Naive thymus-derived CD4-positive, alpha-beta T cell (primary cell): ENCODE measurements at regions of chr14 and their contacts with region 1.

Region 1: GRCh38 chr14:68775143-68776126 is 17.4 kb downstream of the ZFP36L1 start:
- DNase-seq: no peak
- ATAC-seq: no peak
- H3K4me3 ChIP-seq: no peak overlapping the region
- H3K4me3 Mint-ChIP-seq: peak overlapping the region in 2 of 10 donors; percentile 25 to 33
- H3K27ac ChIP-seq: no peak overlapping the region
- H3K27ac Mint-ChIP-seq: peak overlapping the region in 4 of 9 donors; percentile 39 to 68 (median 47)
- H3K4me1 ChIP-seq: peaks cover 26 to 49% of the 10 kb centered on the region in 2 donors
- H3K4me1 Mint-ChIP-seq: peaks cover 47 to 91% (median 80%) of the 10 kb centered on the region in 7 donors
- H3K27me3 ChIP-seq: no peaks in the 10 kb centered on the region
- H3K27me3 Mint-ChIP-seq: no peaks in the 10 kb centered on the region

Region 2: GRCh38 chr14:68649476-68650189 is 125.8 kb before region 1 on chr14:
- CTCF ChIA-PET with region 1: no interaction called
- POLR2A ChIA-PET with region 1: no interaction called
- intact Hi-C with region 1: no loop called
- DNase-seq: peak in 1 of 9 donors; percentile 10
- ATAC-seq: no peak
- H3K4me3 ChIP-seq: no peak overlapping the region
- H3K4me3 Mint-ChIP-seq: no peak overlapping the region
- H3K27ac ChIP-seq: no peak overlapping the region
- H3K27ac Mint-ChIP-seq: peak overlapping the region in 1 of 9 donors; percentile 47
- H3K4me1 ChIP-seq: peaks cover 0 to 3% of the 10 kb centered on the region in 2 donors
- H3K4me1 Mint-ChIP-seq: peaks cover 4 to 24% (median 22%) of the 10 kb centered on the region in 7 donors
- H3K27me3 ChIP-seq: no peaks in the 10 kb centered on the region
- H3K27me3 Mint-ChIP-seq: peaks cover 0 to 6% (median 0%) of the 10 kb centered on the region in 5 donors

Region 3: GRCh38 chr14:68734231-68734775 is 41.1 kb before region 1 on chr14:
- CTCF ChIA-PET with region 1: interaction called, 3 read pairs
- POLR2A ChIA-PET with region 1: interaction called, 4 read pairs
- intact Hi-C with region 1: loop called in 1 of 2 experiments (anchors 5 kb)
- DNase-seq: no peak
- ATAC-seq: peak; percentile 60
- H3K4me3 ChIP-seq: no peak overlapping the region
- H3K4me3 Mint-ChIP-seq: peak overlapping the region in 8 of 10 donors; percentile 2 to 50 (median 14)
- H3K27ac ChIP-seq: no peak overlapping the region
- H3K27ac Mint-ChIP-seq: peak overlapping the region in 7 of 9 donors; percentile 3 to 82 (median 66)
- H3K4me1 ChIP-seq: peaks cover 12 to 31% of the 10 kb centered on the region in 2 donors
- H3K4me1 Mint-ChIP-seq: peaks cover 17 to 53% (median 42%) of the 10 kb centered on the region in 7 donors
- H3K27me3 ChIP-seq: no peaks in the 10 kb centered on the region
- H3K27me3 Mint-ChIP-seq: no peaks in the 10 kb centered on the region

Region 4: GRCh38 chr14:68757618-68758081 is 17.8 kb before region 1 on chr14:
- CTCF ChIA-PET with region 1: interaction called, 3 read pairs
- POLR2A ChIA-PET with region 1: interaction called, 12 read pairs
- intact Hi-C with region 1: no loop called
- DNase-seq: no peak
- ATAC-seq: peak; percentile 90
- H3K4me3 ChIP-seq: no peak overlapping the region
- H3K4me3 Mint-ChIP-seq: no peak overlapping the region
- H3K27ac ChIP-seq: no peak overlapping the region
- H3K27ac Mint-ChIP-seq: no peak overlapping the region
- H3K4me1 ChIP-seq: peaks cover 5 to 7% of the 10 kb centered on the region in 2 donors
- H3K4me1 Mint-ChIP-seq: peaks cover 11 to 31% (median 21%) of the 10 kb centered on the region in 7 donors
- H3K27me3 ChIP-seq: no peaks in the 10 kb centered on the region
- H3K27me3 Mint-ChIP-seq: peaks cover 0 to 5% (median 0%) of the 10 kb centered on the region in 5 donors